WTC11 (cell line): ENCODE measurements at regions of chr10 and their contacts with region 1.

Region 1: GRCh38 chr10:84256510-84257342 is 11.9 kb downstream of the RGR start:
- DNase-seq: peak; percentile 84
- ATAC-seq: peak; percentile 95
- H3K4me3 Mint-ChIP-seq: no peak overlapping the region
- H3K27ac Mint-ChIP-seq: no peak overlapping the region
- H3K4me1 Mint-ChIP-seq: 0 out of 2 replicates have a peak, but pooled peaks cover 3% of the 10 kb centered on the region
- H3K27me3 Mint-ChIP-seq: peaks cover 17% of the 10 kb centered on the region
- CTCF ChIP-seq: peak; percentile 76

Region 2: DNA sequence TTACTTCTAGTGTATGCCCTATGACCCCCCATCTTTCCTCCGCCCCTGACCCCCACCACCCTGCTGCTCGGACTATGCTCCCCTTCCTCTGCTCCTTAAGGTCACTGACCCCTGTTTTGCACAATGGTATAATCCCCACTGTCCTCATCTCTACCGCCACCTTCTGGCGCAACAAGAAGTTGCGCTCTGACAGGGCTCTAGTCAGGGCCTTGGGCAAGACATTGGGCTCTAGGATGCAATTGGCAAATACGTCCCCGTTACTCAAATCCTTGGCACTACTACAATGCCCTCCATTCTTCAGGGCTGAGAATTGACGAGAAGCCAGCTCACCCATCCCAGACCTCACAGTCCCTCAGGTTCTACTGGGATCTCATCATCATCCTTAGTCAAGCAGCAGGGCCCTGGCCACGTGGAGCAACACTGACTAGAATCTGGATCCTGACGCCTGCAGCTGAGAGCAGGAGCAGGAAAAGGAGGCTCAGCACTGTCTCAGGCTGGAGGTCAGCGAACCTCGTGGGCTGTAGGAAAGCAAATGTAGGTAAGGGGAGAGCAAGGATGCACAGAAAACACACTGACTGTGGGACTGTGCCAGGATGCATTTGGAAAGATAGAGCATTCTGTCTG is 42.0 kb before region 1 on chr10:
- CTCF ChIA-PET with region 1: interaction called, 15 read pairs
- POLR2A ChIA-PET with region 1: no interaction called
- DNase-seq: peak; percentile 75
- ATAC-seq: peak; percentile 96
- H3K4me3 Mint-ChIP-seq: no peak overlapping the region
- H3K27ac Mint-ChIP-seq: no peak overlapping the region
- H3K4me1 Mint-ChIP-seq: peaks cover 4% of the 10 kb centered on the region; the same call in 1 of the 2 replicates
- H3K27me3 Mint-ChIP-seq: peaks cover 5% of the 10 kb centered on the region
- CTCF ChIP-seq: peak; percentile 61; the same call in 1 of the 2 replicates

Region 3: GRCh38 chr10:84244651-84245270 is 12.0 kb before region 1 on chr10 and contains the start of gene RGR:
- CTCF ChIA-PET with region 1: interaction called, 14 read pairs
- POLR2A ChIA-PET with region 1: no interaction called
- DNase-seq: no peak
- ATAC-seq: no peak; the same call in 1 of the 2 replicates
- H3K4me3 Mint-ChIP-seq: no peak within 1 kb of the TSS
- H3K27ac Mint-ChIP-seq: no peak within 1 kb of the TSS
- H3K4me1 Mint-ChIP-seq: no peaks in the 10 kb centered on the region
- H3K27me3 Mint-ChIP-seq: peaks cover 6% of the 10 kb centered on the region
- CTCF ChIP-seq: no peak
- total RNA-seq, gene RGR: not detected in 3 replicates